ENCODE measurements at regions of chr17 and their contacts with region 1.

Region 1: DNA sequence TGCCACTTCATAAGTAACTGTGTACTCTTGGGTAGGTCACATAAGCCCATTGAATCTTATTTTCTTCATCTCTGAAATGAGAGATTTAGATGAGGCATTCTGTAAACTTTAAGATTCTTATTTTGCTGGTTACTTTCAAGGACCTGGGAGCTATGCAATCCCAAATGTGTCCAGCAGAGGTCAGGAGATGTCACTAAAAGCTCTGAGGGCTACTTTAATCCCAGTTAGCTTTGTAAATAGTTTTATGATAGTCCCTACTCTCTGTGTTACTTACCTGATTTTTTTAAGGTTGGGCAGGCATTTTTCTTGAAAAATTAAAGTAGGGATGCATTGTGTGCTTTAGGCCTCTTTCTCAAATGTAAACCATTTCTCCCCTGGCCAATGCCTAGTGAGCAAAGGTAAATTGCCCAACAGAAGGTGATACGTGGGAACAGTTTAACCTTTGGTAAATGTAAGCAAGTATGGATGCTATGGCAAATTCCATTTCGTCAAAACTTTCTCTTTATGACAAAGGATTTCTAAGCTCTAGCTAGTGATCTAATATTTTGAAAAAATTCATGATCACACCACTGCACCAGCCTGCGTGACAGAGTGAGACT is 57.1 kb upstream of the WSB1 start:
- DNase-seq: peak; percentile 70
- H3K4me3 ChIP-seq: no peak overlapping the region
- H3K27ac ChIP-seq: no peak overlapping the region
- H3K4me1 ChIP-seq: no peaks in the 10 kb centered on the region
- H3K27me3 ChIP-seq: no peaks in the 10 kb centered on the region
- CTCF ChIP-seq: peak; percentile 94
- EP300 ChIP-seq: no peak
- RAD21 ChIP-seq: peak; percentile 92

Region 2: DNA sequence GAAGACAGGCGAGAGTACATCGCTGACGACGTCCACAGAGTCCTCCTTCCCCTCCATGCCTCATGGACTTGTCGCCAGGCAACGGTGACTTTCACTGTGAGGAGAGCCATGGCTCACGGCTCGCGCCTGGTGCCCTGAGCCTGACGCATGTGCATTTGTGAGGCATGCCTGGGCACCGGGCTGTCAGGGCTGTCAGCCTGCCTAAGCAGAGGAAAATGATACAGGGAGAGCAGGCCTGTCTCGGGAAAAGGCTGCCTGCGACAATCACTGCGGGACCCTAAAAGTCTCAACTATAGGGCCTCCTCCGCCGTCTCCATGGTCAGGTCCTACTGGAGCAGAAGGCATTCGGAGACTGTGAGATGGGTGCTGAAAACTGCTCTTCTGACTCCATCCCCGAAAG is 78.4 kb before region 1 on chr17:
- CTCF ChIA-PET with region 1: no interaction called
- POLR2A ChIA-PET with region 1: no interaction called
- DNase-seq: no peak
- H3K4me3 ChIP-seq: no peak overlapping the region
- H3K27ac ChIP-seq: no peak overlapping the region
- H3K4me1 ChIP-seq: no peaks in the 10 kb centered on the region; a peak in 1 of 4 replicates
- H3K27me3 ChIP-seq: no peaks in the 10 kb centered on the region
- CTCF ChIP-seq: no peak
- EP300 ChIP-seq: no peak
- RAD21 ChIP-seq: no peak

Region 3: GRCh38 chr17:27226615-27227230 is 10.1 kb before region 1 on chr17:
- CTCF ChIA-PET with region 1: interaction called, 21 read pairs
- POLR2A ChIA-PET with region 1: no interaction called
- DNase-seq: no peak
- H3K4me3 ChIP-seq: no peak overlapping the region
- H3K27ac ChIP-seq: no peak overlapping the region
- H3K4me1 ChIP-seq: no peaks in the 10 kb centered on the region; a peak in 1 of 4 replicates
- H3K27me3 ChIP-seq: no peaks in the 10 kb centered on the region; the same call in 1 of the 2 replicates
- CTCF ChIP-seq: no peak
- EP300 ChIP-seq: no peak
- RAD21 ChIP-seq: no peak

Region 4: DNA sequence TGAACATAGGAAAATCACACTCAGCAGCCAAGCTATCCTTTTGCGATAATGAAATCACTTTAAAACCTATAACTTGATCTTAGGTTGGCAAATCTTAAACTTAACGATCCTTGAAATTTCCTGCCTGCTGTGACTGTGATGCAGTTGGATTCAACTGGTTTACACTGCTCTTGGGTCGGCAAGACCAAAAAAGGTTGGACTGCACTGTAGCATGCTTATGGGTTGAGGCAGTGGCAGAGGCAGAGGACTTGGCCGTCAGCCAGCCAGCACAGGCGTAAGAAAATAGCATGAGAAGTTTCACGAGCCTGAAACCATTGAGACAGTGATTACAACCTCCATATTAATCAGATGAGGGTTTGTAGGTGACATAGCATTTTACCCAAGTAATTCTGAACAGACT is 78.5 kb after region 1 on chr17:
- CTCF ChIA-PET with region 1: interaction called, 10 read pairs
- POLR2A ChIA-PET with region 1: no interaction called
- DNase-seq: no peak
- H3K4me3 ChIP-seq: no peak overlapping the region
- H3K27ac ChIP-seq: no peak overlapping the region
- H3K4me1 ChIP-seq: peaks cover 0 to 12% of the 10 kb centered on the region in 2 experiments; a peak in 1 of 4 replicates
- H3K27me3 ChIP-seq: no peaks in the 10 kb centered on the region
- CTCF ChIP-seq: no peak
- EP300 ChIP-seq: no peak
- RAD21 ChIP-seq: no peak

Region 5: DNA sequence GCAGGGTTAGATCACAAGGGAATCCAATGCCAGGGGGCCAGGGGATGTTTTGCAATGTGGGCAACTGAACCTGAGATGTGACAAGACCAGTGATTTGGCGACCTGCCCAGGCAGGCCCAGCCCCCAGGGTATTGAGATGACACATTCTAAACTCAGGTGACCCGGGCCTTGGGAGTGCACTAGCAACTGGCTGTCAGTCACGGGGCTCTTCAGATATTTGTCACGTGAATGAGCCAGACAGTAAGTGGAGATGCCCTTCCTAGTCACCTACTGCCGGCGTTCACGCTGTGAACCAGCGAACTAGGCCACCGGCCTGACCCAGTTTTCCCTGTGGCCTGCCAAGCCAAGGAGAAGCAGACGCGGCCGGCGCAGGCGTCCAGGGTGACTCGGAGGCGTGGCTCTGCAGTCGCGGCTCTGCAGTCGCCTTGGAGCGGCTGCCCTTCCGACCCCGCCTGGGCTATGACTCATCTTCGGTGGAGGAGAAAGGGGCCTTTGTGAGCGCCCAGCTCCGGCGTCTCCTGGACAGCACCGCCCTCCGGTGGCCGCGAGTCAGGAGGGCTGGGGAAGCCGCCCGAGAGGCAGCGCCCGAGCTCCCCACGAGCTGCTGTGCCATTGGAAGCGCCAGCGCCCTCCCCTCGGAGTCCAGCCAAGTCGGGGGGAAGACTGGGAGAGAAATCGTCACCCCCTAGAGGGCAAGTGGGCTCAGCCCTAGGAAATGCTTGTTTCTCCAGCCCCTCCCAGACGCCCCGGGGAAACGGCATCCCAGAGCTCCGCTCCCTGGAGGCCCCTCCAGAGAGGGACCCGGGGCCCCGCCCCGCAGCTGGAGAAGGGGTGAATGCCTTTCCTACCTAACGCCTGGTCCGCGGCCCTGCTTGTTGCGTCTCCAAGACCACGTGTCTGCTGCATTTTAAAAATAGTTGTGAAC is 95.9 kb after region 1 on chr17:
- CTCF ChIA-PET with region 1: interaction called, 125 read pairs
- POLR2A ChIA-PET with region 1: interaction called, 7 read pairs
- DNase-seq: peak; percentile 92
- H3K4me3 ChIP-seq: peak overlapping the region; percentile 45 to 64
- H3K27ac ChIP-seq: peak overlapping the region; percentile 80 to 89
- H3K4me1 ChIP-seq: peaks cover 13 to 16% of the 10 kb centered on the region in 2 experiments; a peak in 2 of 4 replicates
- H3K27me3 ChIP-seq: no peaks in the 10 kb centered on the region
- CTCF ChIP-seq: peak; percentile 88
- EP300 ChIP-seq: peak in 1 of 2 experiments; percentile 14; a peak in 1 of 4 replicates
- RAD21 ChIP-seq: peak; percentile 94

Region 6: DNA sequence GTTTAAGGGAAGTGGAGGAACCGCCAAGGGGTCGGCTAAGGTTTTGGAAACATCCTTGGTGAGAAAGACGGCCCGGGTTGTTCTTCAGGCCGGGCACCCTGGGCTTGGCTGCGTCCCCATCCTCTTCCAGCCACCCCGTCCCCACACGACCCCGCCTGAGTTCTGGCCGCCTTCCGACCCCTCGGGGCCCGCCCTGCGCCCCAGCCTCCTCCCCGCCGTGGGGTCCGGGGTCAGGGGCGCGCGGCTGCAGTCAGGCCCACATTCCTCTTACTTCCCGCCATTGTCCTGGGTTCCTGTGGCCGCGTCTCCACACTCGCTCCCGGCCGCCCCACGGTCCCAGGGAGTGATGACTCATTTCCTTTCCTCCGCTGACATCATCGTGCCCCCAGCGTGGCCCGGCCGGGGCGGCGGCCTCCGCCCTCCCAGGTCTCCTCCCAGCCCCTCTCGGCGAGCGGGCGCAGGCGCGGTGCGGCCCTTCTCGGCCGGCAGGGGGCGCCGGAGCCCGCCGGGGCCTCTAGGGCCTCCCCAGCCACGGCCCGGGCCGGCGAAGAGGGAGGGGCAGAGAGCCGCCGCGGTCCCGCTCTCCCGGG is 116.7 kb after region 1 on chr17:
- CTCF ChIA-PET with region 1: interaction called, 27 read pairs
- POLR2A ChIA-PET with region 1: no interaction called
- DNase-seq: peak; percentile 99
- H3K4me3 ChIP-seq: peak overlapping the region; percentile 65 to 82
- H3K27ac ChIP-seq: peak overlapping the region; percentile 83 to 88
- H3K4me1 ChIP-seq: peaks cover 0 to 11% of the 10 kb centered on the region in 2 experiments; a peak in 1 of 4 replicates
- H3K27me3 ChIP-seq: no peaks in the 10 kb centered on the region
- CTCF ChIP-seq: peak; percentile 78
- EP300 ChIP-seq: peak in 1 of 2 experiments; percentile 74; a peak in 1 of 4 replicates
- RAD21 ChIP-seq: peak; percentile 77

Region 7: DNA sequence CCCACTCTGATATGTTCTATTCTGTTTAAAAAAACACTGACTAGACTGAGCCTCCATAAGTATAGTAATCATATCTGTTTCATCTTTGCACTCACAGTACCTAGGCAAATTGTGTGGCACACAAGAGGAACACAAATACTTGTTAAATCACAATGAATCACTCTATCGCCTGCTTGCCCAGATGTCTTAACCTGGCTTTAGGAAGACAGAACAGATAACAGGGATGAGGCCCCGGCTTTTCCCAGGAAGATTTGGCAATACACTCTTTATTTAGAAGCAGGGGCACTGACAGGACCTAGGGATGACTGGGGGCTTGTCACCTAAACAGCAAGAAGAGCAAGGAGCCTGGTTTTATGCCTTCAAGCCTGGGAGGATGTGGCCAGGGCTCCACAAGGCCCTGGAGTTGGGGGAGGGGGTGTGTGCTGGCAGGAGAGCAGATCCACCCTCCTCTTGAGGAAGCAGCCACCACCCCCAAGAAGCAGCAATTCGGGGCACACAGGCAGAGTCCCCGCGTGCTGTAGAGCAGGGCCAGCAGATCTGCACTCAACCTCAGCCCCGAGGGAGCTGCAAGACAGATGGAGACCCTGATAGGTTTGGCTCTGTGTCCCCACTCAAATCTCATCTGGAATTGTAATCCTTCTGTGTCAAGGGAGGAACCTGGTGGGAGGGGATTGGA is 178.4 kb after region 1 on chr17:
- CTCF ChIA-PET with region 1: no interaction called
- POLR2A ChIA-PET with region 1: no interaction called
- DNase-seq: no peak
- H3K4me3 ChIP-seq: no peak overlapping the region
- H3K27ac ChIP-seq: no peak overlapping the region
- H3K4me1 ChIP-seq: no peaks in the 10 kb centered on the region; a peak in 1 of 4 replicates
- H3K27me3 ChIP-seq: no peaks in the 10 kb centered on the region; the same call in 1 of the 2 replicates
- CTCF ChIP-seq: no peak
- EP300 ChIP-seq: no peak
- RAD21 ChIP-seq: no peak

Region 8: DNA sequence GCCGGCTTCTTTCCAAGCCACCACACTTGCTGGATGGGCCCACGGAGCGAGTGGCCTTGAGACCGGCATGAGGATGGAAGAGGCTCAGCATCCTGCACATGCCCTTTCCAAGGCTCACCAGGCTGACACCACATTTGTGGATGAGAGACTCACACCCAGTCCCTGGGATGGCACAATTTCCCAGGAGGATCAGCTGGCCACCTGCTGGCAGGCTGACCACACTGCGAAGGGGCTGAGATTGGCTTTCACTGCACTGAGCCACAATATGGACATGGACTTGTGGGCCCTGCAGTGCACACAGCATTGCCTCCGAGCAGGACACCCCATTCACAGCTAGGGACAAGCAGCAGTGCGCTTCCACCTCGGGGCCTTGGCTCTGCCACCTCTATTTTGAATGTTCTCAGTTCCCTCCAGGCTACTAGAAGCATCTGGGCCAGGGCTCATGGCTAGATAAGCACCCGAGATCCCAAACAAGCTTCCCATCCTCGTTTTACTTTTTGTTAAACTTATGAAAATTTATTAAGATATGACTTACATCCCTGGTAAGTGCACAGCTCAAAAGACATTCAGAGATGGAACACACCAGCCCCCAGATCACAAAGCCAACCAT is 194.2 kb after region 1 on chr17:
- CTCF ChIA-PET with region 1: interaction called, 21 read pairs
- POLR2A ChIA-PET with region 1: no interaction called
- DNase-seq: peak; percentile 70
- H3K4me3 ChIP-seq: no peak overlapping the region; a peak in 1 of 4 replicates
- H3K27ac ChIP-seq: no peak overlapping the region
- H3K4me1 ChIP-seq: no peaks in the 10 kb centered on the region
- H3K27me3 ChIP-seq: no peaks in the 10 kb centered on the region
- CTCF ChIP-seq: peak; percentile 71
- EP300 ChIP-seq: no peak
- RAD21 ChIP-seq: peak; percentile 71

Region 9: DNA sequence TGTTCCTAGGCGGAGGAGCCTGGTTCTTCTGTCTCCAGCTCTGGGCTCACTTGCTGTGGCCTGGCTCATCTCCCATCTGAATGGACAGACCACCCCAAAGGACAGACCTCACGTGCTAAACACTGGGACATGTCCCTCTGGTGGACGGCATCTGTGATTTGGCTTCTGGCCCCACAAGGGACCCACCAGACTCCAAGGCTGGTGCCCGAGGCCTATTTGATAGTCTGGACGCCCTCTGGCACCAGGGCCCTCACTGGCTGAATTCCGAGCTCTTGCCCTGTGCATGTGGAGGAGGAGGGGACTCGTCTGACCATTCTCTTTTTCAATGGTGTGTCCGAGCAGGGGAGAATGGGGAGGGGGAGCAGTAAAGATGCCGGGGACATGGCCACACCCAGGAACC is 331.4 kb after region 1 on chr17:
- CTCF ChIA-PET with region 1: no interaction called
- POLR2A ChIA-PET with region 1: no interaction called
- DNase-seq: no peak
- H3K4me3 ChIP-seq: no peak overlapping the region
- H3K27ac ChIP-seq: no peak overlapping the region
- H3K4me1 ChIP-seq: peaks cover 16 to 47% of the 10 kb centered on the region in 2 experiments; a peak in 3 of 4 replicates
- H3K27me3 ChIP-seq: no peaks in the 10 kb centered on the region
- CTCF ChIP-seq: no peak
- EP300 ChIP-seq: no peak
- RAD21 ChIP-seq: no peak

Region 10: GRCh38 chr17:27654654-27655524 is 418.1 kb after region 1 on chr17:
- CTCF ChIA-PET with region 1: interaction called, 12 read pairs
- POLR2A ChIA-PET with region 1: no interaction called
- DNase-seq: peak; percentile 93
- H3K4me3 ChIP-seq: peak overlapping the region in 1 of 2 experiments; percentile 43; a peak in 1 of 4 replicates
- H3K27ac ChIP-seq: no peak overlapping the region
- H3K4me1 ChIP-seq: no peaks in the 10 kb centered on the region; a peak in 1 of 4 replicates
- H3K27me3 ChIP-seq: no peaks in the 10 kb centered on the region
- CTCF ChIP-seq: peak; percentile 93
- EP300 ChIP-seq: no peak
- RAD21 ChIP-seq: peak; percentile 68